Mammary epithelial cell (primary cell): ENCODE measurements at regions of chr12 and their contacts with region 1.

Region 1: GRCh38 chr12:6533923-6534694 is at the start of gene GAPDH:
- DNase-seq: peak; percentile 97
- H3K4me3 ChIP-seq: peak within 1 kb of the TSS; percentile 64 to 92 (median 91)
- H3K27ac ChIP-seq: peak within 1 kb of the TSS; percentile 91
- H3K4me1 ChIP-seq: peaks cover 47% of the 10 kb centered on the region
- H3K27me3 ChIP-seq: no peaks in the 10 kb centered on the region
- CTCF ChIP-seq: no peak
- total RNA-seq, gene GAPDH: 6,493 to 13,434 TPM

Region 2: DNA sequence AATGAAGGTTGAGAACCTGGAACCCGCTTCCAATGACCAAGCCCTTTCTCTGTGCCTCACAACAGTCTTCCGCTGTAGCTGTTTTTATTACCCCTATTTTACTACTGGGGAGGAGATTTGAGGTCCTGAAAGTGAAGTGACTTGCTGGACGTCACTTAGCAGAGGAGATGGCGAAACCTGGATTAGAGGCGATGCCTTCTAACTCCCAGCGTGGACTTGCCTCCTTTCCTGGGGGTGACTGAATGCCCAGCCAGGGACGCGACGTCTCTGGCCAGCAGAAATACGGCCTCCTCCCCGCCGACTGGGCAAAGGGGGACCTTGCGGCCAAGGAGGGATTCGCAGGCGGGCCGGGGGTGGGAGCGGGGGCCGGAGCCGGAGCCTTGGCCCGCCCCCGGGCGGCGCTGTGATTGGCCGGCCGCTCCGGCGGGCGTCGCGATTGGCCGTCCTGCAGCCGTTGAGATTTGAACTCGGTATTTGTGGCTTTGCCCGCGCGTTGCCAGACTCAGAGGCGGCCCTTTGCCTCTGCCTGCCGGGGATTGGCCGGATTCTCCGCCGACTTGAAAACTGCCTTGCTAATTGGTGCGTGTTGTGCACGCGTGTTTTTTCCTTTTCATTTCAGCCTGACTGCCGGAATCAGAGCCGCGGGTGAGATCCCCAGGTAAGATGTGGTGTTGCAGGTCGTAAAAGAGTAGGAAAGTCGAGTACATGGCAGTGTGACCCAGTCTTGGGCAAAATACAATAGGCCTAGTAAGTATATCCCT is 40.4 kb before region 1 on chr12 and contains the start of gene NCAPD2:
- CTCF ChIA-PET with region 1: interaction called, 4 read pairs
- dilution Hi-C with region 1: no loop called
- in situ Hi-C with region 1: no loop called
- intact Hi-C with region 1: loop called (anchors 1 kb)
- DNase-seq: peak; percentile 97
- H3K4me3 ChIP-seq: peak within 1 kb of the TSS; percentile 90 to 95 (median 94)
- H3K27ac ChIP-seq: peak within 1 kb of the TSS; percentile 93
- H3K4me1 ChIP-seq: peaks cover 27% of the 10 kb centered on the region
- H3K27me3 ChIP-seq: no peaks in the 10 kb centered on the region
- CTCF ChIP-seq: peak; percentile 7 to 12
- total RNA-seq, gene NCAPD2: 17.8 to 53.7 TPM

Region 3: DNA sequence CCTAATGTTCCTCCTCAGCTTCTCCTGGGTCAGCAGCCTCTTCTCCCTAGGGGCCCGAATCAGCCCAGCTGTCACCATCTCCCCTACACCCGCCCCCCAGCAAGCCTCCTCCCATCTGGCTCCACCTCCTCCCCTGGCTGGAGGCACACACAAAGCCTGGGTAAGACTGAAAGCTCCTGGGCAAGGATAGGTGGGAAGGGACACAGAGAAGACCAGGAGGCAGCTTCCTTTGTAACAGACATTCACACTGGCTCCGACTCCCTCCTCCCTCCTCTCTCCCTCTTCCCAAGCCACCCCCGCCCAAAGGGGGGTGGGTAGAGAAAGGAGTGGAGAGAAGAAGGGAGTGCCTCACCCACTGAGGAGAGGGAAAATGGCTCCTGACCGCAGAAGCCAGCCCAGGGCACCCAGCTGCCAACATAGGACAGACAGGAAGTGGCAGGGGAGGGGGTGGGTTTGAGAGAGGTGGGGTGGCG is 69.0 kb after region 1 on chr12:
- CTCF ChIA-PET with region 1: no interaction called
- dilution Hi-C with region 1: loop called (anchors 5 kb)
- in situ Hi-C with region 1: no loop called
- intact Hi-C with region 1: no loop called
- DNase-seq: peak; percentile 20
- H3K4me3 ChIP-seq: peak overlapping the region in 1 of 3 experiments; percentile 8
- H3K27ac ChIP-seq: no peak overlapping the region
- H3K4me1 ChIP-seq: peaks cover 32% of the 10 kb centered on the region
- H3K27me3 ChIP-seq: no peaks in the 10 kb centered on the region
- CTCF ChIP-seq: no peak